ENCODE measurements at regions of chr9 and their contacts with region 1.

Region 1: DNA sequence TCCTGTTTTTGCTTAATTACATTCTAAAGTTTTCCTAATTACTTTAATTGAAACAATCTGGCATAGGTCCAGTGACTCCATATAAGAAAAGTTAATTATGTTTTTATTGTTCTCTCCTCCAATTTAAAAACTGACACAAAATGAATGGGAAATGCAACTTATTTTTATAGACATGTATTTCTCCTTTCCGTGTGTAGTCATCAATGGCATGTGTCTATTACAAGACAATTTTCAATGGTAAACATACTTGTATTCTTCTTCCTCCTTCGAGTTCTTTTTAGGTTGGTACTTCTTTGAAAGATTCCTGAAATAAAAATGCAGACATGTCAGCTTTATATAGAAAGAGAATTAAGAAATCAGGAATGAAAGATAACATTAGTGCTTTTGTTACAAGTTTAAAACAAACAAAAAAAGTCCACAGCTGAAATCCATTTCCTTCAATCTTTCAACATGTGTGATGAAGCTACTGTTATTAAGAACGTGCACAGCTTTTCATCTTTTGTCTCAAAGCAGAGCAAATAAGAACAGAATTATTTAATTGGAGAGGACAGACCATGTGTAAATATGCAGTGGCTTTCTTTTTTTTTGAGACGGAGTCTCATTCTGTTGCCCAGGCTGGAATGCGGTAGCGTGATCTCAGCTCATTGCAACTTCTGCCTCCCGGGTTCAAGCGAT is 63.8 kb downstream of the FNBP1 start:
- DNase-seq: no peak
- H3K4me3 ChIP-seq: no peak overlapping the region
- H3K4me3 Mint-ChIP-seq: no peak overlapping the region
- H3K27ac Mint-ChIP-seq: no peak overlapping the region
- H3K4me1 ChIP-seq: no peaks in the 10 kb centered on the region
- H3K4me1 Mint-ChIP-seq: no peaks in the 10 kb centered on the region
- H3K27me3 ChIP-seq: no peaks in the 10 kb centered on the region
- H3K27me3 Mint-ChIP-seq: no peaks in the 10 kb centered on the region
- CTCF ChIP-seq: no peak

Region 2: GRCh38 chr9:129110740-129111527 is 868.3 kb before region 1 on chr9 and contains the starts of genes CRAT and PTPA:
- CTCF ChIA-PET with region 1: no interaction called
- POLR2A ChIA-PET with region 1: interaction called, 15 read pairs
- intact Hi-C with region 1: no loop called
- DNase-seq: peak; percentile 95 to 98
- H3K4me3 ChIP-seq: peak within 1 kb of the TSS; percentile 82
- H3K4me3 Mint-ChIP-seq: peak within 1 kb of the TSS; percentile 88
- H3K27ac Mint-ChIP-seq: peak within 1 kb of the TSS; percentile 90
- H3K4me1 ChIP-seq: peaks cover 24% of the 10 kb centered on the region
- H3K4me1 Mint-ChIP-seq: peaks cover 36% of the 10 kb centered on the region
- H3K27me3 ChIP-seq: no peaks in the 10 kb centered on the region
- H3K27me3 Mint-ChIP-seq: no peaks in the 10 kb centered on the region
- CTCF ChIP-seq: no peak
- total RNA-seq, gene CRAT: 16.2 and 20.7 TPM in 2 replicates
- total RNA-seq, gene PTPA: 100 and 107 TPM in 2 replicates

Region 3: DNA sequence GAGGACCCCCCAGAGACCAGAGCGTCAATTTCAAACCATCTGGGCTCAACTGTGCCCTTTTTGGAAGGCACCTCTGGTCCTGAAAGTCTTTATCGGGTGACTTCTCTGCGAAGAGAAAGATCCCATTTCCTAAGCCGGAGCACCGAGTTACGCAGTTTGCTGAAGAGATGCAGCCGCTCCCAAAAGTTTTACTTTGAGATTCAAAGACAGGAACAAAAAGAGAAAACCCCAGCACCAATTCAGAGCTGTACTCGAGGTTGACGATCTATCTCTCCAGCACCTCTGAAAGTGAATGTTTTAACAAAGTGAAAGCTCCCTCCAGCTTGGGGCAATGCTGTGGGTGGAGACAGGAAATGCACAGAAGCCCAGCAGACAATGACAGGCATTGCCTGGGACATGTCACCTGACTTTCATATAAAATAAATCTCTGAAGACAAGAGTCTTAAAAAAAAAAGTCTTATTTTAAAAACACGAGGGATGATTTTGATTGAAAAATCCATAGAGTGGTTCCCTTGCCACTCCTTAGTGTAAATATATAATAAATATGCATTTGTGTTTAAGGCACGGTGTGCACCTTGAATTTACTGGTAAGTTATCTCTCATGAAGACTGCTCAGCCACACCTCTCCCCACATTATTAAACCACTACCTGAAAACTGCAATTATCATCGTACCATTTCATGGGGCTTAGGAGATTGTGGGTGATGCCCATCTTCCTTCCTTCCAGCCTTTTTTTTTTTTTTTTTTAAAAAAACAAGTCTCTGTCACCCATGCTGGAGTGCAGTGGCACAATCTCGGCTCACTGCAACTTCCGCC is 16.1 kb before region 1 on chr9:
- CTCF ChIA-PET with region 1: no interaction called
- POLR2A ChIA-PET with region 1: no interaction called
- intact Hi-C with region 1: no loop called
- DNase-seq: no peak
- H3K4me3 ChIP-seq: no peak overlapping the region
- H3K4me3 Mint-ChIP-seq: no peak overlapping the region
- H3K27ac Mint-ChIP-seq: no peak overlapping the region
- H3K4me1 ChIP-seq: 0 out of 2 replicates have a peak, but pooled peaks cover 9% of the 10 kb centered on the region
- H3K4me1 Mint-ChIP-seq: peaks cover 11% of the 10 kb centered on the region
- H3K27me3 ChIP-seq: no peaks in the 10 kb centered on the region
- H3K27me3 Mint-ChIP-seq: no peaks in the 10 kb centered on the region
- CTCF ChIP-seq: no peak

Region 4: GRCh38 chr9:130095872-130096271 is 116.7 kb after region 1 on chr9:
- CTCF ChIA-PET with region 1: no interaction called
- POLR2A ChIA-PET with region 1: no interaction called
- intact Hi-C with region 1: no loop called
- DNase-seq: no peak
- H3K4me3 ChIP-seq: no peak overlapping the region
- H3K4me3 Mint-ChIP-seq: no peak overlapping the region
- H3K27ac Mint-ChIP-seq: no peak overlapping the region
- H3K4me1 ChIP-seq: no peaks in the 10 kb centered on the region
- H3K4me1 Mint-ChIP-seq: no peaks in the 10 kb centered on the region
- H3K27me3 ChIP-seq: no peaks in the 10 kb centered on the region
- H3K27me3 Mint-ChIP-seq: no peaks in the 10 kb centered on the region
- CTCF ChIP-seq: no peak

Region 5: GRCh38 chr9:130626249-130626992 is 647.2 kb after region 1 on chr9:
- CTCF ChIA-PET with region 1: no interaction called
- POLR2A ChIA-PET with region 1: interaction called, 14 read pairs
- intact Hi-C with region 1: no loop called
- DNase-seq: peak in 1 of 2 experiments; percentile 22
- H3K4me3 ChIP-seq: no peak overlapping the region
- H3K4me3 Mint-ChIP-seq: no peak overlapping the region
- H3K27ac Mint-ChIP-seq: no peak overlapping the region
- H3K4me1 ChIP-seq: no peaks in the 10 kb centered on the region
- H3K4me1 Mint-ChIP-seq: no peaks in the 10 kb centered on the region
- H3K27me3 ChIP-seq: no peaks in the 10 kb centered on the region
- H3K27me3 Mint-ChIP-seq: no peaks in the 10 kb centered on the region
- CTCF ChIP-seq: no peak